GM12878 (cell line): ENCODE measurements at regions of chr3 and their contacts with region 1.

Region 1: DNA sequence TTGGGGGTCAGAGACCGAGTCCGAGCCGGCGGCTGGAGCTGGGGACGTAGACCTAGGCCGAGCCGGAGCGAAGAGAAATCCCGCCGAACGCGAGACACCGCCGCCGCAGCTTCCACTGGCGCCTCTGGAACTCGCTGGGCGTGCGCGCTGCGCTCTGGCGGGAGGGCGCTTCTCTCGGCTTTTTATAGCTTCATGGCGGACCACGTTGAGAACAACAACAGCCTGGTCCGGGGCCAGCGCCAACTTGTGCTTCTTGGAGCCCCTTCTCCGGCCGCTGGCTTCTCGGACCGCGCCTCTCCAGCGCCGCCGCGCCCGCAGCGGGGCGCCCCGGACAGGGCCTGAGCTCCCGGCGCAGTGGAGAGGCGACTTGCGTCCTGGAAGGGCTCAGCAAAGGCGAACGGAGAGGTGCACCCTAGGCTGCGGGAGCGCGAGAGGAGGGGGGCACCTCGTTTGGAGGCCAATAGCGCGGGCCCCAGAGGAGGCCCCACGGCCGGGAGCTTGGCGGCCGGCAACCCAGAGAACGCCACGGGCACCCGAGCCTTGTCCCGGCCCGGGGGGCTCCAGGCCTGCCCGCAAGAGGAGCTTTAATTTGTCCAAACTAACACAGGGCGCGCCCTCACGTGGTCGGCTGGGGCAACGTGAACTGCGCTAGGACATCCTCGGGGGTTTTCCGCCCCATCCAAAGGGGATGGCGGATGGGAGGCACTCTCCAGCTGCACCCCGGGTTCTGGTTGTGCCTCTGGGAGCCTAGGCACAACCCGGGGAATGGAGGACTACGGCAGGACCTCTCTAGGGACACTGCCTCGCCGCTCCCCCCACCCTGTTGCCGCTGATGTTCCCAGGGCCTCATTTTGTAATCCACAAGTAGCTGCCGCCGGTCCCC is 37.7 kb downstream of the HMCES start:
- DNase-seq: no peak
- ATAC-seq: peak; percentile 56
- H3K4me3 ChIP-seq: peak overlapping the region; percentile 88
- H3K27ac ChIP-seq: peak overlapping the region; percentile 41; the same call in 1 of the 2 replicates
- H3K4me1 ChIP-seq: peaks cover 16% of the 10 kb centered on the region
- H3K27me3 ChIP-seq: peaks cover 0 to 3% of the 10 kb centered on the region in 2 experiments; a peak in 2 of 4 replicates
- CTCF ChIP-seq: peak; percentile 61 to 76 (median 71)
- EP300 ChIP-seq: peak in 1 of 2 experiments; percentile 22; a peak in 1 of 4 replicates
- POLR2A ChIP-seq: peak; percentile 87
- RAD21 ChIP-seq: peak; percentile 52

Region 2: DNA sequence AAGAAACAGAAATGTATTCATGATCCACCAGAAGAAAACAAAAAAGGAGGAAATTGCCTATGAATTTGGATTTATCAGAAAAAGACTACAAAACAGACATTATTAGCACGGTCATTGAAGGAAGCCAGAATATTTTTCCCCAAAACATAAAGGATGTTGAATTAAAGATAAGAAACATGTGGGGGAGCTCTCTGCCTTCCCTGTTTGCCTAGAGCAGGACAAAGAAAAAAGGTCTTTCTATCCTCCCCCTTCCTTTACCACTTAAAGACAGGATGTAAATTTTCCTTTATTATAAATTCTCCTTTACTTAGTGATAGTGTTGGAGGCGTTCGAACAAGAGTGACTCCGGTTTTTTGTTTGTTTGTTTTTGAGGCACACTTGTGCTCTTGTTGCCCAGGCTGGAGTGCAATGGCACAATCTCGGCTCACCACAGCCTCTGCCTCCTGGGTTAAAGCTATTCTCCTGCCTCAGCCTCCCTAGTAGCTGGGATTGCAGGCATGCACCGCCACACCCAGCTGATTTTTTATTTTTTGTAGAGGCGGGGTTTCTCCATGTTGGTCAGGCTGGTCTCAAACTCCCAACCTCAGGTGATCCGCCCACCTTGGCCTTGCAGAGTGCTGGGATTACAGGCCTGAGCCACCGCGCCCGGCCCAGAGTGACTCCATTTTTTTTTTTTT is 650.9 kb before region 1 on chr3:
- CTCF ChIA-PET with region 1: no interaction called
- POLR2A ChIA-PET with region 1: no interaction called
- RAD21 ChIA-PET with region 1: no interaction called
- SMC1A ChIA-PET with region 1: no interaction called
- in situ Hi-C with region 1: no loop called
- intact Hi-C with region 1: no loop called
- DNase-seq: no peak
- ATAC-seq: no peak
- H3K4me3 ChIP-seq: no peak overlapping the region
- H3K27ac ChIP-seq: no peak overlapping the region
- H3K4me1 ChIP-seq: no peaks in the 10 kb centered on the region
- H3K27me3 ChIP-seq: no peaks in the 10 kb centered on the region
- CTCF ChIP-seq: peak in 1 of 3 experiments; percentile 16; a peak in 1 of 6 replicates
- EP300 ChIP-seq: no peak
- POLR2A ChIP-seq: no peak
- RAD21 ChIP-seq: peak; percentile 37; the same call in 1 of the 2 replicates

Region 3: GRCh38 chr3:128946411-128946810 is 370.0 kb before region 1 on chr3:
- CTCF ChIA-PET with region 1: no interaction called
- POLR2A ChIA-PET with region 1: no interaction called
- RAD21 ChIA-PET with region 1: no interaction called
- SMC1A ChIA-PET with region 1: no interaction called
- in situ Hi-C with region 1: no loop called
- intact Hi-C with region 1: no loop called
- DNase-seq: no peak
- ATAC-seq: no peak
- H3K4me3 ChIP-seq: no peak overlapping the region
- H3K27ac ChIP-seq: no peak overlapping the region
- H3K4me1 ChIP-seq: no peaks in the 10 kb centered on the region
- H3K27me3 ChIP-seq: no peaks in the 10 kb centered on the region; a peak in 2 of 4 replicates
- CTCF ChIP-seq: no peak
- EP300 ChIP-seq: no peak
- POLR2A ChIP-seq: no peak
- RAD21 ChIP-seq: no peak

Region 4: DNA sequence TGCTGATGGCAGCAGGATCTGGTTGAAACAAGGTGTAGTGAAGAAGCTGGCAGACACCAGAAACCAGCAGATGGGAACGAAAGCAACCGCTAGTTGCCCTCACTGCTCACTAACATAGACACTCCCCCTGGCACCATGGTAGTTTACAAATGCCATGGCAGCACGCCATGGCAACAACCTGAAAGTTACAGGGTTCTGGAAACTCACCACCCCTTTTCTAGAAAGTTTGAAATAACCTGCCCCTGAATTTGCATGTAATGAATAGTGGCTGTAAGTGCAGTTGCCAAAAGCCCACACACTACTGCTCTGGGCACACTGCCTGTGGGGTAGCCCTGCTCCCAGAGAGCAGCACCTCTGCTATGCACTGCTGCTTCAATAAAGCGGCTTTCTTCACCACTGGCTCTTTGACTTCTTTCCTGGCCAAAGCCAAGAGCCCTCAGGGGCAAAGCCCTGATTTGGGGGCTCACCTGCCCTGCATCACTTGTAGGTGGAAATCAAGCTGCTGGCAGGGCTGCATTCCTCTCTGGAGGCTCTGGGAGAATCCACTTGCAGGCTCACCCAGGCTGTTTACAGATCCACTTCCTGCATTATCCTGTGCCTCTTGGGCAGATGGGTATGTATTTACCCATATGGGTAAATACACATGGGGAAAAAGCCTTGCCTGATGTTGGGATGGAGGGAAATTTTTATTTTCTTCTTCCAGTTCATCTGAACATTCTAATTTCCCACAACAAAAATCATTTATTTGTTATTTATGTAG is 257.8 kb before region 1 on chr3:
- CTCF ChIA-PET with region 1: interaction called, 20 read pairs
- POLR2A ChIA-PET with region 1: no interaction called
- RAD21 ChIA-PET with region 1: interaction called, 10 read pairs
- SMC1A ChIA-PET with region 1: no interaction called
- in situ Hi-C with region 1: no loop called
- intact Hi-C with region 1: no loop called
- DNase-seq: peak; percentile 48
- ATAC-seq: peak; percentile 82
- H3K4me3 ChIP-seq: no peak overlapping the region
- H3K27ac ChIP-seq: no peak overlapping the region
- H3K4me1 ChIP-seq: 0 out of 2 replicates have a peak, but pooled peaks cover 3% of the 10 kb centered on the region
- H3K27me3 ChIP-seq: no peaks in the 10 kb centered on the region; a peak in 1 of 4 replicates
- CTCF ChIP-seq: no peak
- EP300 ChIP-seq: no peak
- POLR2A ChIP-seq: no peak
- RAD21 ChIP-seq: no peak

Region 5: DNA sequence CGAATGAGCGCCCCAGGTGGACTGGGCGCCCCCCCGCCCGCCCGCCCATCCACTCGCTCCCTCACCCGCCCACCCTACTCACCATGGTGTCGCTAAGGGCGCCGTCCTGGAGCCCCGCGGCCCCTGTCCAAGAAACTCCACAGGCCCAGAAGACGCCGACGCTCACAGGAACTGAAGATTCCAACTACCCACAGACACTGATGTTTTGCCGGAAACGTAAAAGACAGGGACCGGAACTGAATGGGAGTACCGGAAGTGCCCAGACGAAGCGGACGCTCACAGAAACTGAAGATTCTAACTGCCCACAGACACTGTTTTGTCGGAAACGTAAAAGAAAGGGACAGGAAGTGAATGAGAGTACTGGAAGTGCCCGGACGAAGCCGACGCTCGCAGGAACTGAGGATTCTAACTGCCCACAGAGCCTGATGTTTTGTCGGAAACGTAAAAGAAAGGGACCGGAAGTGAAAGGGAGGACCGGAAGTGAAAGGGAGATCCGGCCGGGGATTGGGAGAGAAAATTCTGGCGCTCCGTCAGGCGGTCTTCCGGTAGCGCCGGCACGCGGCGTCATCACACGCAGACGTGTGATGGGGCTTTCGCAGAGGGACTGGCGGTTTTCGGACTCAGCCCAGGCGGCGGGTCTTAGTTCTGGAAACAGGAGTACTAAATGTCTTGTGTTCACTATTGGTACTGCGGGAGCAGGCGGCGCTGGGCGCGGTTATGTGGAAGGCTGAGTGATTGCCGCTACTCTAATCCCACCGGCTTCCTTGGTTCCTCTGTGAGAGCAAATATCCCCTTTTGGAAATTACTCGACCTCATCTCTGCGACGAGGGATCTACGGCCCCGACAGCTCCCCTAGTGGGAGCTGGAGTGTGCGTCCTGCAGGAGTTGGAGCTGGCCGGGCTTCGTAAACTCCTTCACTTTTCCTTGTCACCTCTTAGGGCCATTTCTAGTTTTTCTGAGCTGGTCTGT is 155.2 kb before region 1 on chr3 and contains the start of gene ISY1:
- CTCF ChIA-PET with region 1: interaction called, 12 read pairs
- POLR2A ChIA-PET with region 1: interaction called, 7 read pairs
- RAD21 ChIA-PET with region 1: interaction called, 11 read pairs
- SMC1A ChIA-PET with region 1: interaction called, 7 read pairs
- in situ Hi-C with region 1: no loop called
- intact Hi-C with region 1: no loop called
- DNase-seq: peak; percentile 87
- ATAC-seq: peak; percentile 87
- H3K4me3 ChIP-seq: peak within 1 kb of the TSS; percentile 99
- H3K27ac ChIP-seq: peak within 1 kb of the TSS; percentile 100
- H3K4me1 ChIP-seq: peaks cover 4% of the 10 kb centered on the region
- H3K27me3 ChIP-seq: no peaks in the 10 kb centered on the region
- CTCF ChIP-seq: peak; percentile 79 to 86 (median 80)
- EP300 ChIP-seq: peak in 1 of 2 experiments; percentile 61; a peak in 2 of 4 replicates
- POLR2A ChIP-seq: peak; percentile 94
- RAD21 ChIP-seq: peak; percentile 54
- polyA plus RNA-seq, gene ISY1: 54.1 to 58.2 TPM

Region 6: GRCh38 chr3:129183569-129184395 is 132.6 kb before region 1 on chr3 and contains the start of gene CNBP:
- CTCF ChIA-PET with region 1: interaction called, 3 read pairs
- POLR2A ChIA-PET with region 1: interaction called, 4 read pairs
- RAD21 ChIA-PET with region 1: interaction called, 3 read pairs
- SMC1A ChIA-PET with region 1: interaction called, 4 read pairs
- in situ Hi-C with region 1: no loop called
- intact Hi-C with region 1: loop called (anchors 5 kb)
- DNase-seq: peak; percentile 65
- ATAC-seq: peak; percentile 97
- H3K4me3 ChIP-seq: peak within 1 kb of the TSS; percentile 97
- H3K27ac ChIP-seq: peak within 1 kb of the TSS; percentile 97
- H3K4me1 ChIP-seq: peaks cover 9% of the 10 kb centered on the region
- H3K27me3 ChIP-seq: no peaks in the 10 kb centered on the region
- CTCF ChIP-seq: no peak
- EP300 ChIP-seq: no peak
- POLR2A ChIP-seq: peak; percentile 98
- RAD21 ChIP-seq: no peak
- polyA plus RNA-seq, gene CNBP: 618 to 719 TPM

Region 7: DNA sequence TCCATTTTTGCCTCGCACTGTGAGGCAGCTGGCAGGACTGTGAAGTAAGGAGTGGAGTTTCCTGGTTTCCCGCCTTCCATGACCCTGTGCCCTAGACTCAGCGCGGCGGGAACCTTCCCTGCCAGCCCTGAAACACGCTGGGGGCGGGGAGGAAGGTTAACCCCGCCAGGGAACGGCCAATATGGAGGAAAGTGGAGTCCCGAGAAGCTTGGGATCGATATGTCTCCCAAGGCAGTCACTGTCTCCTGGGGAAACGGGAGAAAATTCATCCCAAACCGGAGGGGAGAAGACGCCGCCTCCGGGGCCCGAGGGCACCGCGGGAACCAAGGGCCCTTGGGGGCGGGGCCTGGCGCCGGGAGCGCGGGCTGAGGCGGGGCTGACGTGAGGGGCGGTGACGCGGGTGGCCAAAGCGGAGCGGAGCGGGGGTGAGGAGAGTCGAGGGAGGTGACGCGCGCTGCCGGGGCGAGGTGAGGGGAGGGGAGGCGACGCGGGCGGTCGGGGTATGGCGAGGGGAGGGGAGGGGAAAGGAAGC is 37.9 kb before region 1 on chr3 and contains the start of gene HMCES:
- CTCF ChIA-PET with region 1: interaction called, 23 read pairs
- POLR2A ChIA-PET with region 1: interaction called, 27 read pairs
- RAD21 ChIA-PET with region 1: interaction called, 22 read pairs
- SMC1A ChIA-PET with region 1: interaction called, 75 read pairs
- in situ Hi-C with region 1: no loop called
- intact Hi-C with region 1: loop called (anchors 2 kb)
- DNase-seq: peak; percentile 31
- ATAC-seq: peak; percentile 75
- H3K4me3 ChIP-seq: peak within 1 kb of the TSS; percentile 76
- H3K27ac ChIP-seq: peak within 1 kb of the TSS; percentile 80
- H3K4me1 ChIP-seq: peaks cover 58% of the 10 kb centered on the region
- H3K27me3 ChIP-seq: no peaks in the 10 kb centered on the region
- CTCF ChIP-seq: no peak
- EP300 ChIP-seq: 0 out of 4 replicates have a peak, but pooled peaks of 1 of the 2 experiments have one; percentile 14
- POLR2A ChIP-seq: peak; percentile 88
- RAD21 ChIP-seq: no peak
- polyA plus RNA-seq, gene HMCES: 17.2 to 18.5 TPM

Region 8: DNA sequence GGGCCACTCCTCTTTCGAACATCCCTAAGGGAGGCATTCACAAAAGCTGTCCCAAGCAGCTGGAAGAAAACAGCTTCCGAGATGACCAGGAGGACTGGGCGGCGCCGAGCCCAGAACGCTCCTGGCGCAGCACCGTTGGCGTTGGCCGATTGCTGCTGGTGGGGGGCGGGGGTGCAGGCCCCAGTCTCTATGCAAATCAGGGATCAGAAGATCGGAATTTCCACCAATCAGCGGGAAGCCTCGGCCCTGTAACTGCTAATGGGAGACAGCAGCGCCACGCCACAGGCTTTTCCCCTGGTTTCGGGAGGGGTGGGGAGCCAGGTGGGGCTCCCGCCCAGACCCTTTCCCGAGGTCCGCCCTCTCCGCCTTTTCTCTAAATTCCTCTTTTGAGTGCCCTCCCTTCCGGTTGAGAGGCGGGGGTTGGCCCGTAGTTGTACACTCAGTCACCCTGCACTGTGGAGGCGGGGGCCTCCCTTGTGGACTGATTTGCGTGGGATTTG is 10.7 kb before region 1 on chr3:
- CTCF ChIA-PET with region 1: interaction called, 14 read pairs
- POLR2A ChIA-PET with region 1: interaction called, 14 read pairs
- RAD21 ChIA-PET with region 1: interaction called, 6 read pairs
- SMC1A ChIA-PET with region 1: interaction called, 5 read pairs
- in situ Hi-C with region 1: no loop called
- intact Hi-C with region 1: no loop called
- DNase-seq: no peak
- ATAC-seq: peak; percentile 64
- H3K4me3 ChIP-seq: no peak overlapping the region; the same call in 1 of the 2 replicates
- H3K27ac ChIP-seq: peak overlapping the region; percentile 33; the same call in 1 of the 2 replicates
- H3K4me1 ChIP-seq: peaks cover 17% of the 10 kb centered on the region
- H3K27me3 ChIP-seq: no peaks in the 10 kb centered on the region
- CTCF ChIP-seq: no peak
- EP300 ChIP-seq: no peak; a peak in 2 of 4 replicates
- POLR2A ChIP-seq: peak; percentile 56; the same call in 1 of the 2 replicates
- RAD21 ChIP-seq: no peak